ENCODE measurements at regions of chr2 and their contacts with region 1.

Region 1: DNA sequence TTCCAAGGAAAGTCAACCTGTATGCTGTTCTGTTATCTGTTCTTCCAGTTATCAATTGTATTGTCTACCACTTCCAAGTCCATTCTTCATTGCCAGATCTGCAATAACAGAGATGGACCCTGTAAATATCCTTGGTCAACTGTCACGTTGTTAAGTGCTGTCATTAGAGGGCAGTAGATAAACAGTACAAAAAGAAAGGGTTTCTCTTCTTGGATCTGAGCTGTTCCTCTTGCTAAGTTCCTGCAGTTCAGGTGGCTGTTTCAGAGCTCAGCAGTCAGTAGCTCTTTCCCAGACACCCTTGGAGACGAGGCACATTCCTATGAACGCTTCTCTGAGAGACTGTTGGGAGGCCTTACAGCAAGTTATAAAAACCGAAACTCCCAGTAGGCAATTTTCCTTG is 957.1 kb upstream of the CHAC2 start:
- DNase-seq: no peak
- ATAC-seq: peak; percentile 78
- H3K4me3 ChIP-seq: no peak overlapping the region
- H3K27ac ChIP-seq: no peak overlapping the region
- H3K4me1 ChIP-seq: no peaks in the 10 kb centered on the region
- H3K27me3 ChIP-seq: no peaks in the 10 kb centered on the region
- CTCF ChIP-seq: peak; percentile 19 to 50 (median 27); a peak in 3 of 6 replicates
- EP300 ChIP-seq: no peak
- POLR2A ChIP-seq: no peak
- RAD21 ChIP-seq: peak; percentile 66

Region 2: DNA sequence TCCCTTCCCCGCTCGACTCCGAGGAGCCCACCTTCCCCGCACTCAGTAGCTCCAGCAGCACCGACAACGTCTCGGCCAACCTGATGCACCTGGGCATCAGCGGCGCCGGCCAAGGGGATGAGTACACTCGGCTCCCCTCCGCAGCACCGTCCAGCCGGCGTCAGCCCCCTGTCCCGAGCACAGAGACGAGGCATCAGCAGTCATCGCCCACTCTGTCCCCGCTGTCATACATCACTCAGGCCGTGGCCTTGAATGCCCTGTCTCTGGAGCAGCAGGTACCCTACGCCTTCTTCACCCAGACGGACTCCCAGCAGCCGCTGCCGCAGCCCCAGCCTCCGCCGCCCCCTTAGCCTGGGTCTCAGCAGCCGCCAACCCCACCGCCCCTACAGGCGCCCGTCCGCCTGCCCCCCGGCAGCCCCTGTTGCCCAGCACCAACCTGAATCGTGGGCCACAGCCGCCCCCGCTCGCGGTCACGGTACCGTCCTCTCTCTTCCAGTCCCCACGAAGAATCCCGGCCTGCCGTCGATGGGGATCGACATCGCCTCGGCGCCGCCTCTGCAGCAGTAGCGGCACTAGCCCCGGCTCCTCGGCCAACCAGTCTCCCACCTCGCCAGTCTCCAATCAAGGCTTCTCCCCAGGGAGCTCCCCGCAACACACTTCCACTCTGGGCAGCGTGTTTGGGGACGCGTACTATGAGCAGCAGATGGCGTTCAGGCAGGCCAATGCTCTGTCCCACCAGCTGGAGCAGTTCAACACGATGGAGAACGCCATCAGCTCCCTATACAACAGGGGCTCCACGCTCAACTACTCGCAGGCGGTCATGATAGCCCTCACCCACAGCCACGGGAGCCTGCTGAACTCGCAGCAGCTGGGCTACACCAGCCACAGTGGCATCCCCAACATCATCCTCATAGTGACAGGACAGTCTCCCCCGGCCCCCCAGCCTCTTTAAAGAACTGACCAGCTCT is 238.8 kb before region 1 on chr2:
- CTCF ChIA-PET with region 1: no interaction called
- POLR2A ChIA-PET with region 1: no interaction called
- RAD21 ChIA-PET with region 1: no interaction called
- SMC1A ChIA-PET with region 1: no interaction called
- in situ Hi-C with region 1: no loop called
- intact Hi-C with region 1: no loop called
- DNase-seq: no peak
- ATAC-seq: no peak
- H3K4me3 ChIP-seq: no peak overlapping the region
- H3K27ac ChIP-seq: no peak overlapping the region
- H3K4me1 ChIP-seq: no peaks in the 10 kb centered on the region
- H3K27me3 ChIP-seq: no peaks in the 10 kb centered on the region
- CTCF ChIP-seq: no peak
- EP300 ChIP-seq: no peak
- POLR2A ChIP-seq: no peak
- RAD21 ChIP-seq: no peak

Region 3: GRCh38 chr2:52597346-52597745 is 213.1 kb before region 1 on chr2:
- CTCF ChIA-PET with region 1: no interaction called
- POLR2A ChIA-PET with region 1: no interaction called
- RAD21 ChIA-PET with region 1: no interaction called
- SMC1A ChIA-PET with region 1: no interaction called
- in situ Hi-C with region 1: no loop called
- intact Hi-C with region 1: no loop called
- DNase-seq: no peak
- ATAC-seq: no peak
- H3K4me3 ChIP-seq: no peak overlapping the region
- H3K27ac ChIP-seq: no peak overlapping the region
- H3K4me1 ChIP-seq: no peaks in the 10 kb centered on the region
- H3K27me3 ChIP-seq: no peaks in the 10 kb centered on the region
- CTCF ChIP-seq: no peak
- EP300 ChIP-seq: no peak
- POLR2A ChIP-seq: no peak
- RAD21 ChIP-seq: no peak

Region 4: DNA sequence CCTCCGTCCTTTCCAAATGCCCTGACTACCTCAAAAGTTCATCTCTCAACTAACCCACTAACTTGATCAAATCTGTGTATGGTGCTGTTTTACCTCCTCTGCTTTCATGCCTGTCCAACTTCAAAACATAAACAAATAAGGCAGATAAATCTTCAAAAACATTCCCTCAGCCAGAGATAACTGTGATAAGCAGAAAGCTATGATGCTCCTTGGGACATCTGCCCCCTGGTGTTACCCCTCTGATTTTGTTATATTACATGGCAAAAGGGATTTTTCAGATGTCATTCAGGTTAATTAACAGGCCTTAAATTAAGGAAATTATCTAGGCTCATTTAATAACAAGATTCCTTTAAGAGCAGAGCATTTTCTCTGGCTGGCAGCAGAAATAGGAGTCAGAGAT is 146.3 kb after region 1 on chr2:
- CTCF ChIA-PET with region 1: interaction called, 6 read pairs
- POLR2A ChIA-PET with region 1: no interaction called
- RAD21 ChIA-PET with region 1: interaction called, 5 read pairs
- SMC1A ChIA-PET with region 1: interaction called, 3 read pairs
- in situ Hi-C with region 1: no loop called
- intact Hi-C with region 1: loop called (anchors 2 kb)
- DNase-seq: no peak
- ATAC-seq: no peak
- H3K4me3 ChIP-seq: no peak overlapping the region
- H3K27ac ChIP-seq: no peak overlapping the region
- H3K4me1 ChIP-seq: no peaks in the 10 kb centered on the region
- H3K27me3 ChIP-seq: no peaks in the 10 kb centered on the region
- CTCF ChIP-seq: no peak; a peak in 1 of 6 replicates
- EP300 ChIP-seq: no peak
- POLR2A ChIP-seq: no peak
- RAD21 ChIP-seq: 0 out of 2 replicates have a peak, but pooled peaks have one; percentile 13

Region 5: DNA sequence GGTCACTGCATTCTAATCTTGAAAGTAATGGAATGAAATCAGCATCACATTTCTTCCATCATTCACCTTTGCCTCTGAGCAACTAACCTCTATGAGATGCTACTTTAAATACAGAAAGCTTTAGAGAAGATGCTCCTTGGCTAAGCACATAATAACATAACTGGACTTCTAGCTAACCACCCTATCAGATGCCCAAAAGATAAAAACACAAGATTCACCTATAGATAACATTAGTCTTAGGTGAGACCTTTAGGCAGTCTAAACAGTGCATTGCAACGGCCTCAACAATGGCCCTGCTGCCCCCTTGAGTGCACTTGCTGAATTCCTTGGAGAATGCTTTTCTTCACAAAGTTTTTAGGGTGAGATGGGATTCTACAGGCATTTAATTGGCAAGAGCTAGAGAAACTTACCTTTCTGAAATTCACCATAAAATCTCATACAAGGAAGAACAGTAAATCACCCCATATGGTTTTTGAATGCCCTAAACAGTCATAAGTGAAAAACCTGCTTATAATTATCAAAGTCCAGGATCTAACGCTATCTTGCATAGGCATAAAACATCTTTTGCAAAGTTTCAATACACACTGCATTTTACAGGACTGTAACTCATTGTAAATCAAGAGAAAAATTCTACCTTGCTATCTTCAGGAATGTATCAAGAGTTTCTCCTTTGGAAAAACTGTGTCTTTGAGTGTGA is 165.9 kb after region 1 on chr2:
- CTCF ChIA-PET with region 1: interaction called, 4 read pairs
- POLR2A ChIA-PET with region 1: no interaction called
- RAD21 ChIA-PET with region 1: no interaction called
- SMC1A ChIA-PET with region 1: no interaction called
- in situ Hi-C with region 1: no loop called
- intact Hi-C with region 1: loop called (anchors 5 kb)
- DNase-seq: no peak
- ATAC-seq: peak; percentile 82
- H3K4me3 ChIP-seq: no peak overlapping the region
- H3K27ac ChIP-seq: no peak overlapping the region
- H3K4me1 ChIP-seq: no peaks in the 10 kb centered on the region
- H3K27me3 ChIP-seq: no peaks in the 10 kb centered on the region; a peak in 1 of 4 replicates
- CTCF ChIP-seq: peak; percentile 47 to 65 (median 48); a peak in 4 of 6 replicates
- EP300 ChIP-seq: no peak
- POLR2A ChIP-seq: no peak
- RAD21 ChIP-seq: peak; percentile 77

Measured in GM12878 (cell line).